Sciatic nerve (tissue), 2 donors: ENCODE measurements at regions of chr7 and their contacts with region 1.

Region 1: DNA sequence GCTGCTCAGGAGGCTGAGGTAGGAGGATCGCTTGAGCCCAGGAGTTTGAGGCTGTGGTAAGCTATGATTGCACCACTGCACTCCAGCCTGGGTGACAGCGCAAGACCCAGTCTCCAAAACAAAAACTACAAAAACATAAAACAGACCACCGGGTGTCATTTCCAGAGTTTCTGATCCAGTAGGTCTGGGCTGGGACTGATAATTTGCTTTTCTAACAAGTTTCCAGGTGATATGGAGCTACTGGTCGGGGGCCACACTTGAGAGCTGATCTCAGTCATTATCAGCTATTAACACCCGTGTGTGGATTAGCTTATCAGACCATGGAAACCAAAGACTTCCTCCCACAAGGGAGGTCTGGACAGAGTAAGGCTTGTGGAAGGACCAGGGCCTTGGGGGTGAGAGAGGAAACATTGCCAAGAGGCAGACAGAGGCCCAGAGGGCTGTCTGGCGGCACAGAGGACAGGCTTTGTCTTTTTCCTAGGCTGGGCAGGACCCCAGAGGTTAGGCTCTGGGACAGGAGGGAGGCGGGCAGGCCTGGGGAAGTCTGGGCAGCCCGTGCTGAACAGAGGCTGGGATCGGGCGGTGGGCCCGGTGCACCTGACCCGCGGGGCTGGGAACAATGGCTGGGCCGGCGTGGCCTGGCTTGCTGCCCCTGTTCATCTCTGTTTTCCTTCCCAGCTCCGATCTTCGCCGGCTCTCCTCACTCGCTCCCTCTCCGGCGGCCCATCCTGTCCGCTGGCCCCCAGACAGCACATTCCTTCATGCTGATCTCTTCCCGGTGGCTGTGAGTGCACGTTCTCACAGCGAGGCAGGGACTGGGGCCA is 25.2 kb downstream of the TMEM270 start:
- DNase-seq: no peak
- ATAC-seq: peak; percentile 77

Region 2: GRCh38 chr7:74026903-74027551 is 140.8 kb after region 1 on chr7:
- intact Hi-C with region 1: loop called (anchors 10 kb)
- DNase-seq: peak; percentile 91
- ATAC-seq: peak; percentile 71

Region 3: DNA sequence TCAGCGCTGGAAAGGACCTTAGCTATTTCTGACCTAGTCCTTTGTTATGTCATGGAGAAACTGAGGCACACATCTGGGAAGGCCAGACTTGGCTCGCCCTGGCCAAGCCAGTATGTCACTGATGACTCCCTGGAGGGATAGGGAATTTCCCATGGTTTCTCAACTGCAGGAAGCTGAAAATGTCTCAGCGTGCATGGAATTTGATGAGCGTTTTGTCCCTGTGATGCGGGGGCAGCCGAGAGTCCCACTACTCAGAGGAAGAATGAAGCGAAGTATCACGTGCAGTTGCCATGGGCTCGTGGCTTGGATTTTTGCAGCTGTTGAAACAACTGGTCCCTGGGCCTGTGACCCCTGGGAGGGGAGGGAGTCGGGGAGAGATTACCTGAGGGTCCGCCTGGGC is 447.8 kb after region 1 on chr7:
- intact Hi-C with region 1: no loop called
- DNase-seq: no peak
- ATAC-seq: peak; percentile 39